ENCODE measurements at regions of chr1 and their contacts with region 1.

Region 1: GRCh38 chr1:201511941-201512539 is 5.1 kb upstream of the CSRP1 start:
- DNase-seq: no peak
- H3K4me3 ChIP-seq: no peak overlapping the region
- CTCF ChIP-seq: no peak

Region 2: GRCh38 chr1:201376464-201377374 is 135.3 kb before region 1 on chr1:
- CTCF ChIA-PET with region 1: interaction called, 10 read pairs
- POLR2A ChIA-PET with region 1: no interaction called
- DNase-seq: no peak
- H3K4me3 ChIP-seq: no peak overlapping the region
- CTCF ChIP-seq: peak; percentile 83

Region 3: DNA sequence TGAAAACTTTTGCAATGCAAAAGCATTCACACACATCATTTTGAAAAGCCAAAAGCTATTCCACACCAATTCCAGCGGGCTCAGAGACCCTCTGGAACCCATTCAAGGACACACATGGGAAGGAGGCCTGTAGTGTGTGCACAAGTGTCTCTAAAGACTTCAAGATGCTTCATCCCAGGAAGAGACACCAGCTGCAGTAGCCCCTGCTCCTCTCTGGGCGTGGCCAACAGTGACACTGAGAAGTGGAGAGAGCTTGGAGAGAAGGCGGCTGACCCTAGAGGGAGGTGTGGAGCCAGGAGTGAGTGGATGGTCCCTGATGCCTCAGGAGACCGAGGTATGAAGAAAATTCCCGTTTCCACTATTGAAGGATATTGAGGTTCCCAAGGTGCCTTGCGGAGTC is 75.6 kb before region 1 on chr1:
- CTCF ChIA-PET with region 1: interaction called, 248 read pairs
- POLR2A ChIA-PET with region 1: no interaction called
- DNase-seq: no peak
- H3K4me3 ChIP-seq: no peak overlapping the region
- CTCF ChIP-seq: peak; percentile 46

Region 4: GRCh38 chr1:201468844-201469511 is 43.1 kb before region 1 on chr1 and contains the start of gene PHLDA3:
- CTCF ChIA-PET with region 1: interaction called, 119 read pairs
- POLR2A ChIA-PET with region 1: interaction called, 25 read pairs
- DNase-seq: no peak
- H3K4me3 ChIP-seq: peak within 1 kb of the TSS; percentile 97
- CTCF ChIP-seq: no peak

Region 5: DNA sequence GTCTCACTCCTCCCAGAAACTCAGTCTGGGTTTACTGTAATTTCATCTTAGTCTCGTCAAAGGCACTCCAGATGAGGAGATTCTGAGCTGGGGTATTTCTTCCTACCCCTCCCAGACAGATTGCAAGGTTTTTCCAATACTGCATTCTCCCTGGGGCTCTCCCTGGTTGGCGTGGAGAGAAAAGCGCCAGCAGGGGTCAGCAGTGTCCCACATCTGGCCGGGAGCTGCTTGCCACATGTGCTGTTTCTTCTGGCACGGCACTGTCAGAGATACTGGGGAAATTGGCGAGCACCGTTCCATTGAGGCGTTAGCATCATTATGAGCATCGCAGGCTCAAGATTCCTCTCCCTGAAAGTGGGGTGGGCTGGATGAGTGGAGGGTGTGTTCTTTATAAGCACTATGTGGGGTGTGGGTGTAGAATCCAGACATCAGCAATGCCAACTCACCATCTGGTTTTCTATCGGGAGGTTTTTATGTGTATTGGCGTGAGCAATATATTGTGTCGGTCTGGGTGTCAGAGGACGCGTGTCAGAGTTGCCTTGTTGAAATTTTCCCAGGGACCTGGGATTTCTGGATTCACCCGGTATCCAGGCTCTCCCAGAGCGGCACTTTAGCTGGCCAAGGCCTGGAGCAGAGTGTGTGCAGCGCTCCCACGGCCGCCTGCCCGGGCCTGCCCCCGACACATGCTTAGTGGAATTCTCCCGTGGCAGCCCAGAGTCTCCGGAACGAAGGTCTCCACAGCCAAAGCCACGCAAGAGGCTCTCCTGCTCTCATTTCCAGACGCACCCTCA is 18.9 kb after region 1 on chr1:
- CTCF ChIA-PET with region 1: interaction called, 170 read pairs
- POLR2A ChIA-PET with region 1: no interaction called
- DNase-seq: peak; percentile 40
- H3K4me3 ChIP-seq: no peak overlapping the region
- CTCF ChIP-seq: peak; percentile 87

Region 6: GRCh38 chr1:201573923-201574322 is 61.9 kb after region 1 on chr1:
- CTCF ChIA-PET with region 1: no interaction called
- POLR2A ChIA-PET with region 1: no interaction called
- DNase-seq: no peak
- H3K4me3 ChIP-seq: no peak overlapping the region
- CTCF ChIP-seq: no peak

Region 7: GRCh38 chr1:201792534-201793305 is 280.7 kb after region 1 on chr1:
- CTCF ChIA-PET with region 1: interaction called, 10 read pairs
- POLR2A ChIA-PET with region 1: no interaction called
- DNase-seq: peak; percentile 37
- H3K4me3 ChIP-seq: no peak overlapping the region
- CTCF ChIP-seq: peak; percentile 91

Measured in AG04449 (cell line).